ENCODE measurements at regions of chr7 and their contacts with region 1.

Region 1: GRCh38 chr7:126398285-126398684 is 854.5 kb downstream of the GRM8 start:
- DNase-seq: no peak
- ATAC-seq: peak in 3 of 4 donors; percentile 28 to 68 (median 61)
- H3K4me3 ChIP-seq: no peak overlapping the region
- H3K27ac ChIP-seq: peak overlapping the region in 8 of 12 donors; percentile 9 to 68 (median 57)
- H3K4me1 ChIP-seq: peaks cover 0 to 8% (median 2%) of the 10 kb centered on the region in 12 donors
- H3K27me3 ChIP-seq: no peaks in the 10 kb centered on the region
- CTCF ChIP-seq: no peak
- POLR2A ChIP-seq: no peak

Region 2: DNA sequence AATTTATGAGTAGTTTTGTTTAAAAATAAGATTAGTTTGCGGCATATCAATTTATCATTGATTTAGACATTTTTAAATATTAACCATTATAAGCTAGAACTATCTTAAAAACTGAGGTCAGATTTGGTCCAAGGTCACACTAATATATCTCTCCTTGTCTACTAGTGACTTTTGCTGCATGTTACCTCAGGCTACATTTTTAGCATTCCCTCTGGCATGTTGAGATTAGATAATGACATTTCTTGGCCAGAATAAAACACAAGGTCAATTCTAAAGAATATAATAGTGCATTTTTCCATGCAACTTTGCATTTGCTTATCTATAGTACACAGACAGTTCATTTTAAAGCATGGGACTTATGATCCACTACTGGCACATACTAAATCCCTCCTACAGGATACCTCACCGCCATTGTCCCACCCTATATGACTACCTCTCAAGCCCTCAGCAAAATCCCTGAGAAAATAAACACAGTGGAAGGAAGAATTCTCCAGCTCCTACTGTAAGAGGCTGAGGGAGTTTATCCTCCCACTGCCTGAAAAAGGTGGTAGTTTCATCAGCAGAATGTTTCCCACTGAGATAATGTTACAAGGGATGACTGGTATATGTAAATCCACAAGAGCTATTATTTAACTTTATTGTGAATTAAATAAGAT is 38.1 kb after region 1 on chr7:
- intact Hi-C with region 1: no loop called
- DNase-seq: no peak
- ATAC-seq: peak in 3 of 4 donors; percentile 32 to 45 (median 32)
- H3K4me3 ChIP-seq: no peak overlapping the region
- H3K27ac ChIP-seq: peak overlapping the region in 4 of 12 donors; percentile 3 to 36 (median 21)
- H3K4me1 ChIP-seq: peaks cover 0 to 14% (median 0%) of the 10 kb centered on the region in 12 donors
- H3K27me3 ChIP-seq: no peaks in the 10 kb centered on the region
- CTCF ChIP-seq: no peak
- POLR2A ChIP-seq: no peak

Region 3: DNA sequence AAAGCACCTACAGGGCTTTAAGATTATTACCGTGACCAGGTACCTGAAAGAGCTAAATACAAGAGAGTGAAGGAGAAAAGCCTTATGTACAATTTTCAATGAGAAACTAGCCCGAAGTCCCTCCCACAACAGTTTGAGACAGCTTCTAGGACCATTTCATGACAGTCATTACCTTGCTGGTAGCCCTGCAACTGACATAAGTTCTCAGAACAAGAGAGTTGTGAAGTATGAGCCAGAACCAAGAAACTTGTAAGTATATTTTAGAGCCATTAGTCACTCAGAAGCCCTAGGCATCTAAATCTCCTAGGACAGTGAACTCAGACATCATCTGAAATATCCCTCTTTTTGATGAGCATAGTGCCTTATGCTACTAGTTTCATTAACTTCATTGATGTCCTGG is 62.4 kb after region 1 on chr7:
- intact Hi-C with region 1: no loop called
- DNase-seq: no peak
- ATAC-seq: no peak
- H3K4me3 ChIP-seq: no peak overlapping the region
- H3K27ac ChIP-seq: no peak overlapping the region
- H3K4me1 ChIP-seq: no peaks in the 10 kb centered on the region
- H3K27me3 ChIP-seq: no peaks in the 10 kb centered on the region
- CTCF ChIP-seq: no peak
- POLR2A ChIP-seq: no peak

Region 4: GRCh38 chr7:126495001-126495400 is 96.7 kb after region 1 on chr7:
- intact Hi-C with region 1: loop called in 1 of 10 experiments (anchors 10 kb)
- DNase-seq: peak in 4 of 5 donors; percentile 11 to 38 (median 30)
- ATAC-seq: peak; percentile 70 to 85 (median 80)
- H3K4me3 ChIP-seq: peak overlapping the region in 9 of 12 donors; percentile 24 to 53 (median 41)
- H3K27ac ChIP-seq: peak overlapping the region in 11 of 12 donors; percentile 34 to 84 (median 58)
- H3K4me1 ChIP-seq: peaks cover 0 to 13% (median 2%) of the 10 kb centered on the region in 12 donors
- H3K27me3 ChIP-seq: no peaks in the 10 kb centered on the region
- CTCF ChIP-seq: no peak
- POLR2A ChIP-seq: no peak

Measured in heart left ventricle (tissue), 16 donors.